Right ventricle myocardium inferior (tissue), 1 donor: ENCODE measurements at regions of chr3 and their contacts with region 1.

Region 1: DNA sequence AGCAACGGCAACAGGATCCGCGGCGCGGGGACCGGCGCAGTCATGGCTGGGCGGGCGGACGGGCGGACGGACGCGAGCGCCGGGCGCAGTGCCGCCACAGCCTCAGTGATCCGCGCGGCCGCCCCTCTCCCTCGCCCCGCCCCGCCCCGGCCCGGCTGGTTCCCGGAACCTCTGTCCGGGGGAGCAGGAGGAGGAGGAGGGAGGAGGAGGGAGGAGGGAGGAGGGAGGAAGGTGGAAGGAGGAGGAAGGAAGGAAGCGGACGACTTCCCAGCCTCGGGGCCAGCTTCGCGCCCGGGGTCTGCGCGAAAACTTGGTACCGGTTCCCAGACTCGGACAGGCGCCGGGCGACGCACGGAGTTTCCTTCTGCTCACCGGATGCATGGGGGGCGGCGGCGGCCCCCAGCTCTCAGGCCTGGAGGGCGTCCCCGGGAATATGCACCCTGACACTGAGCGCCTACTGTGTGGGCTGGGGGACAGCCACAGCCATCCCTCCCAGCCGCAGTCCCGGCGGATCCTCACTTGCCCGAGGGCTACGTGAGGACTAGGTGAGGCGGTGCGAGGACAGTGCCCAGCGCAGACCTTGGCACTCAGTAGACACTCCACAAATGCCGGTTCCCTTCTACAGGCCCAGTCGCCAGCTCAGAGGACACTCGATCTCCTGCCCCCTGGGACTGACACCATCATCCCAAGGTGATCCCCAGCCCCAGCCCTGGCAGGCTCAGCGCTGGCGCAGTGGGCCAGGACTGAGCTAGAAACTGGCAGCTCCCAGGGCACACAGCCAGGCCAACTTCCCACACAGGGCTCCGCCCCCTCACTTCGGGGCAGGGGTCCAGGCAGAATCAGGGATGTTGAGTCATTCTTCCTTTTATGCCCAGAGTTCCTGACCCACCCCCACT is at the start of gene SHISA5:
- DNase-seq: peak; percentile 92
- ATAC-seq: peak; percentile 91
- total RNA-seq, gene SHISA5: 57.3 TPM

Region 2: GRCh38 chr3:48465531-48466378 is 38.5 kb before region 1 on chr3:
- intact Hi-C with region 1: loop called (anchors 1 kb)
- DNase-seq: peak; percentile 97
- ATAC-seq: peak; percentile 95

Region 3: DNA sequence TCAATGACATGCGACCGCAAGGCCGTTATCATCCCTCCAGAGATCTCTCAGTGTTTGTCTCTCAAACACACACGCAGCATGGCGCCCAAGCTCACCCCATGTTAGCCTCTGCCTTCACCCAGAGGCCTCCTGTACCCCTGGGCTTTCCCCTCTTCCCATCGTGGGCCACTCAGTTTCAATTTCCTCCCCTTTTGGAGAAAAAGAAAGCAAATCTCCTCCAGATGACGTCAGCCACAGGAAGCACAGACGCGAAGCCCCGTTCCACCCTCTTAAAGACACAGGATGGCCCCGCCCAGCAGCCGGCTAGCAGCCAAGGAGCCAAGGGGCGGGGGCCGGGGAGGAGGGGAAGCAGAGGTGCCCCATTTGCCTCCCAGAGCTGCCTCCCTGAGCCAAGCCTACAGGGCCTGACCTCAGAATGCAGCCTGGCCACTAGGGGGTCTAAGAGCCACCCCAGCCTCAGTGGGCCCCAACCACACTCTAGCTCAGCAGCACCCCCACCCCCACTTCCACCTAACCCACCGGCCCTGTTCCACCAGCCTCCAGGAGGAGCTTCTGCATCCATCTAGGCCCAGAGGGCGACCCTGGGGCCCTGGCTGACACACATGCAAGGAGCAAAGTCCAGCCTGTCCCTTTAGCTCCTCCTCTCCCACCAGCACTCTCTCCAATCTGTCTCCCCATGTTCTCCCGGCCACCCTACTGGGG is 31.2 kb before region 1 on chr3:
- intact Hi-C with region 1: loop called (anchors 2 kb)
- DNase-seq: peak; percentile 97
- ATAC-seq: peak; percentile 90